ENCODE measurements at regions of chr1 and their contacts with region 1.

Region 1: DNA sequence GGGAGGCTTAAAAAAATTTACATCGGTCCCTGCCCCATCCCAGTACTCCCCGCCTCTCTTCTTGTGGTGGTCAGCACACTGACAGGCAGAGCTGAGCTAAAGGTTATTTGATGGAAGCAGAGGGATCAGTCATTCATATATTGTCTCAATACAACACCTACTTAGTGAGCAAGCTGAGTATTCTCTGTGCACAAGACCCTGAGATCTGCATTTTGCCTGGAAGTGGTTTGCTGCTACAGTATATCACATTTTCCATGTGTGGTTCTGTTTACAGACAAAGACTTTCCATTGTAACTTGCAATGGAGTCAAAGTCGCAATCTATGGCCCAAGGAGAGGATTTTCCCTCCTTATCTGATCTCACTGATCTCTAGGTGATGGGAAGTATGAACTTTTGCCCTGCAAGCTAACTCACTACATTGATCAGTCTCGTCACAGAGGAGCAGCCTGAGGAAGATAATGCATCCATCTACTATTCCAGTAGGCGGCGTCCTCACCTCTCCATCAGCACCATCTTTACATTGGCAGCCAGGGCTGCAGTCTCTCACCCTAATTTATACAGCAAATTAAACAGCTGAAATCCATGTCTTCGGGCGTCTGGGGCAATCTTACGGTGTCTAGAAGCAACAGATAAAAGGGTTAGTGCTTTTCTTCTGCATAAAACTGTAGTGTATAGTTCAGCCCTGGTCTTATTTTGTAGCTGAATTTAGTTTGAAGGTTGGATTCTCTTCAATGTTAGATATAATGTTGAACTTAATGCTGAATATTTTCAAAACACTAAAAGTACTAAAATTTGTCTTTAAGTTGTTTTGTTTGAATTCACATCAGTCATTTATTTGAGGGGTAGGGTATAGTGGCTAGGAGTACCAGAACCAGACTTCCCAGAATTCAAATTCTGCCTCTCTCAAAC is 3.2 kb upstream of the TRAF5 start:
- DNase-seq: peak; percentile 41 to 85 (median 66)
- ATAC-seq: peak; percentile 69
- H3K4me3 ChIP-seq: no peak overlapping the region
- H3K4me3 Mint-ChIP-seq: no peak overlapping the region
- H3K27ac ChIP-seq: no peak overlapping the region
- H3K27ac Mint-ChIP-seq: no peak overlapping the region
- H3K4me1 ChIP-seq: peaks cover 10% of the 10 kb centered on the region
- H3K4me1 Mint-ChIP-seq: peaks cover 29% of the 10 kb centered on the region
- H3K27me3 ChIP-seq: no peaks in the 10 kb centered on the region
- H3K27me3 Mint-ChIP-seq: no peaks in the 10 kb centered on the region
- CTCF ChIP-seq: peak; percentile 81

Region 2: DNA sequence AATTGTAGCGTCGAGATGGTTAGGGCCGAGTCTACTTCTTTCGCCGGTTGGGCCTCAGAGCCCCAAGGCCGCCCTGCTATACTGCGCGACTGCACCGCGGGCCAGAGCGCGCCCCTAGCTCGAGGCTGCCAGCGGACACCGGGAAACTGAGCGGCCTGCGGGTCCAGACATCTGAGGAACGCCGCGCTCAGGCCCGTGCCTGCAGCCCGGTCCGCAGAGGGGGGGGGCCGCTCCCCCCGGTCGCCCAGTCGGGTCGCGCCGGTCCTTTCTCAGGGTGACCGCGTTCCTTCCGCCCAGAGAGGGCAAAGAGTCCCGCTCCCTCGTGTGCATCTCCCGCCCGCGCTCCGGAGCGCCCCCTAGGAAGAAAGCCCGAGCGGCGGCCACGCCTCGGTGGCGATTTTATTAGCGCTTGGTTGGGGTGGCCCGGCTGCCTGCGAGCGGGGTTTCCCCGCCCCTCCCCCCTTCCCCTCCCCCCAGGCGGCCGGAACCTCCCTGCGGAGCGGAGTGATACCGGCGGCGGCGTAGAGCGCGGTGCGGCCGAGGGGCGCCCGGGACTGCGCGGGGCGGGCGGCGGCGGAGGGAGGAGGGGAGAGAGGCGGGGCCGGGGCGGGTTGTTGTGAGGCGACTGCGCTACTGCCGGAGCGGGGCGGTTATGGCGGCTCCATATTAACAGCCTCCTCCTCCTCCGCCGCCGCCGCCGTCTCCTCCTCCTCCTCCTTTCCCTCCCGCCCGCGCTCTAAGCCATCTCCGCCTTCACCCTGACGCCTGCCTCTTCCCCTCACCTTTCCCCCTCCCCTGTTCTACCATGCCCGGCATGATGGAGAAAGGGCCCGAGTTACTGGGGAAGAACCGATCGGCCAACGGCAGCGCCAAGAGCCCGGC is 64.4 kb before region 1 on chr1 and contains the start of gene RCOR3:
- CTCF ChIA-PET with region 1: interaction called, 6 read pairs
- POLR2A ChIA-PET with region 1: interaction called, 5 read pairs
- intact Hi-C with region 1: loop called (anchors 1 to 5 kb)
- DNase-seq: peak; percentile 81 to 96 (median 91)
- ATAC-seq: peak; percentile 76
- H3K4me3 ChIP-seq: peak within 1 kb of the TSS; percentile 74 to 88
- H3K4me3 Mint-ChIP-seq: peak within 1 kb of the TSS; percentile 95
- H3K27ac ChIP-seq: peak within 1 kb of the TSS; percentile 80 to 84
- H3K27ac Mint-ChIP-seq: peak within 1 kb of the TSS; percentile 94
- H3K4me1 ChIP-seq: peaks cover 16% of the 10 kb centered on the region
- H3K4me1 Mint-ChIP-seq: peaks cover 18% of the 10 kb centered on the region
- H3K27me3 ChIP-seq: no peaks in the 10 kb centered on the region
- H3K27me3 Mint-ChIP-seq: no peaks in the 10 kb centered on the region
- CTCF ChIP-seq: peak; percentile 40
- total RNA-seq, gene RCOR3: 54.6 to 61.1 TPM

Region 3: DNA sequence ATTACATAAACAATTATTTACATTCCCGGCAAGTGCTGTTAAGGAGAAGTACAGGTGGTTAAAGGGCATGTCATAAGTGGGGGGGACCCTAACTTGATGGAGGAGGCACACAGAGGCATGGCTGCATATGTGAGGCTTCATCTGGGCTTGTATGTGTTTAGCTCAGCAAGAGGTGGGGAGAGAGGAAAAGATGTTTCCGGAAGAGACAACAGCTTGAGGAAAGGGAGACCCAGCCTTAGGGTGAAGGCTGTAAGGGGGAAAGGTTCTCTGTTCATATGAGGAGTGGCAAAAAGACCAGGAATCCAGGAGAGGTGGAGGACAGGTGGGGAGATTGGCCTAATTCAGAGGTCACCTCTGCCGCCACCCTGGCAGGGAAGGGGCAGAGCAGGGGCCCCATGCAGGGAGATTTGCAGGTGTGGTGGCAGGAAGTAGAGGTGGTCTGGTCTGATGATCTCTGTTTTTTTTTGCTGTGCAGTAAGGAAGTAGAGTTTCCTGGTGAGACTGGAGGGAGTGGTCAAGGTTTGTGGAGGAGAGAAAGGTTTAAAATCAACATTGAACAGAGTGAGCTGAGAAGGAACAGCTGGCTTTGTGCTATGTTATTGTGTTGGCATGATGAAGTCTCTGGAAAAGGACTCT is 12.2 kb after region 1 on chr1:
- CTCF ChIA-PET with region 1: interaction called, 11 read pairs
- POLR2A ChIA-PET with region 1: interaction called, 15 read pairs
- intact Hi-C with region 1: loop called in 1 of 2 experiments (anchors 1 kb)
- DNase-seq: peak in 4 of 9 experiments; percentile 34 to 66 (median 52)
- ATAC-seq: peak; percentile 52
- H3K4me3 ChIP-seq: peak overlapping the region; percentile 19 to 40
- H3K4me3 Mint-ChIP-seq: peak overlapping the region; percentile 64
- H3K27ac ChIP-seq: peak overlapping the region; percentile 33 to 77
- H3K27ac Mint-ChIP-seq: peak overlapping the region; percentile 88
- H3K4me1 ChIP-seq: peaks cover 81% of the 10 kb centered on the region
- H3K4me1 Mint-ChIP-seq: peaks cover 90% of the 10 kb centered on the region
- H3K27me3 ChIP-seq: no peaks in the 10 kb centered on the region
- H3K27me3 Mint-ChIP-seq: no peaks in the 10 kb centered on the region
- CTCF ChIP-seq: no peak

Region 4: GRCh38 chr1:211382714-211383480 is 59.5 kb after region 1 on chr1:
- CTCF ChIA-PET with region 1: interaction called, 9 read pairs
- POLR2A ChIA-PET with region 1: interaction called, 8 read pairs
- intact Hi-C with region 1: loop called in 1 of 2 experiments (anchors 1 kb)
- DNase-seq: peak; percentile 45 to 87 (median 76)
- ATAC-seq: peak; percentile 89
- H3K4me3 ChIP-seq: peak overlapping the region; percentile 85 to 95
- H3K4me3 Mint-ChIP-seq: peak overlapping the region; percentile 85
- H3K27ac ChIP-seq: peak overlapping the region; percentile 93 to 95
- H3K27ac Mint-ChIP-seq: peak overlapping the region; percentile 98
- H3K4me1 ChIP-seq: peaks cover 8% of the 10 kb centered on the region
- H3K4me1 Mint-ChIP-seq: peaks cover 19% of the 10 kb centered on the region
- H3K27me3 ChIP-seq: no peaks in the 10 kb centered on the region
- H3K27me3 Mint-ChIP-seq: no peaks in the 10 kb centered on the region
- CTCF ChIP-seq: no peak

Region 5: DNA sequence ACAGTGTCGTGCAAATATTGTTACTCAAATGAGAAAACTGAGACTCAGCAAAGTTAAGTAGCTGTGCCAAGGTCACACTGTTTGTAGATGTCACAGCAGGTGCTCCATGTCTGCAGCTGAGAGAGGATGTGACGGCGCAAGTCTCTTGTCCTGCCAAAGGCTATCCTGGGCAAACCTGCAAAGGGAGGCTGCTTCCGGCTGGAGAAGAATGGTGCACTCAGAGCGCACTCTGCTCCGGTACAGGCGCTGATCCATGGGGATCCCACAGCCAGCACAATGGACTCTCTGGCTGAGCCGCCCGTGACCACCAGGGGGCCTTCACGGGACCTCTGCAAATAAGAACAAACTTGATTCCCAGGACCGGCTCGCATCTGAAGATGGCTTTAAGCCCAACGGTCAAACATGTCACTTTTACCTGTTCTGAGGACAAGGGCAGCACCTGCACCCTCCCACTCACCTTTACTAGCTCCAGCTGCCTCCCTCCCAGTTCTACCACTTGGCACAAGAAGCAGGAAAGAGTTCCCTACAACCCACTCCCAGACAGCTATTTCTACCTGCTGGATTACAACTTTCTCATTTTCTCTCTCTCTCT is 146.6 kb after region 1 on chr1:
- CTCF ChIA-PET with region 1: interaction called, 41 read pairs
- POLR2A ChIA-PET with region 1: no interaction called
- intact Hi-C with region 1: no loop called
- DNase-seq: peak in 8 of 9 experiments; percentile 14 to 60 (median 34)
- ATAC-seq: no peak
- H3K4me3 ChIP-seq: no peak overlapping the region
- H3K4me3 Mint-ChIP-seq: no peak overlapping the region
- H3K27ac ChIP-seq: no peak overlapping the region
- H3K27ac Mint-ChIP-seq: no peak overlapping the region
- H3K4me1 ChIP-seq: no peaks in the 10 kb centered on the region
- H3K4me1 Mint-ChIP-seq: no peaks in the 10 kb centered on the region
- H3K27me3 ChIP-seq: no peaks in the 10 kb centered on the region
- H3K27me3 Mint-ChIP-seq: no peaks in the 10 kb centered on the region
- CTCF ChIP-seq: peak; percentile 46

Region 6: GRCh38 chr1:211514030-211514754 is 190.8 kb after region 1 on chr1:
- CTCF ChIA-PET with region 1: interaction called, 43 read pairs
- POLR2A ChIA-PET with region 1: no interaction called
- intact Hi-C with region 1: loop called (anchors 1 kb)
- DNase-seq: peak; percentile 26 to 79 (median 67)
- ATAC-seq: peak; percentile 65
- H3K4me3 ChIP-seq: no peak overlapping the region
- H3K4me3 Mint-ChIP-seq: peak overlapping the region; percentile 69
- H3K27ac ChIP-seq: no peak overlapping the region
- H3K27ac Mint-ChIP-seq: no peak overlapping the region
- H3K4me1 ChIP-seq: peaks cover 20% of the 10 kb centered on the region
- H3K4me1 Mint-ChIP-seq: peaks cover 17% of the 10 kb centered on the region
- H3K27me3 ChIP-seq: peaks cover 0 to 2% of the 10 kb centered on the region in 2 experiments
- H3K27me3 Mint-ChIP-seq: no peaks in the 10 kb centered on the region
- CTCF ChIP-seq: no peak